ENCODE measurements at regions of chr13 and their contacts with region 1.

Region 1: GRCh38 chr13:77599351-77599750 is 63.8 kb downstream of the SCEL start:
- DNase-seq: no peak
- H3K4me3 Mint-ChIP-seq: no peak overlapping the region
- H3K27ac Mint-ChIP-seq: no peak overlapping the region
- H3K4me1 Mint-ChIP-seq: no peaks in the 10 kb centered on the region
- H3K27me3 Mint-ChIP-seq: no peaks in the 10 kb centered on the region

Region 2: DNA sequence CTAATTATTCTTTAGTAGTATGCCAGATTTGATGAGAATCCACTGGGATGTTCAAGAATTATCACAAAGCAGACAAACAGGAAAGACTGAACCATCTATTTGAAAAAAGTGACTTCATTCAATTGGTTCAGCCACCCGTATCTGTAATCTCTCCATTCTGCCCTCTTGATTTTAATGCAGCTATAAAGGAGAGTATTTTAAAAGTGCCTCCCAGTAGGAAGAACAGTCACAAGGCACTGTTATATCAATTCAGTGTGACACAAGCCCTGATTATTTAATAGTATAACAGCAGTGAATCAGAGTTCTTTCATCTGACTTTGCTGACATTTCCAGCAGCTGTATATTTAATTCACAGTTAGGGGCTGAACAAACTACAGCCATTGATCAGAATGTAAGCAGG is 20.8 kb after region 1 on chr13:
- CTCF ChIA-PET with region 1: no interaction called
- DNase-seq: no peak
- H3K4me3 Mint-ChIP-seq: no peak overlapping the region
- H3K27ac Mint-ChIP-seq: no peak overlapping the region
- H3K4me1 Mint-ChIP-seq: no peaks in the 10 kb centered on the region
- H3K27me3 Mint-ChIP-seq: peaks cover 11% of the 10 kb centered on the region

Region 3: DNA sequence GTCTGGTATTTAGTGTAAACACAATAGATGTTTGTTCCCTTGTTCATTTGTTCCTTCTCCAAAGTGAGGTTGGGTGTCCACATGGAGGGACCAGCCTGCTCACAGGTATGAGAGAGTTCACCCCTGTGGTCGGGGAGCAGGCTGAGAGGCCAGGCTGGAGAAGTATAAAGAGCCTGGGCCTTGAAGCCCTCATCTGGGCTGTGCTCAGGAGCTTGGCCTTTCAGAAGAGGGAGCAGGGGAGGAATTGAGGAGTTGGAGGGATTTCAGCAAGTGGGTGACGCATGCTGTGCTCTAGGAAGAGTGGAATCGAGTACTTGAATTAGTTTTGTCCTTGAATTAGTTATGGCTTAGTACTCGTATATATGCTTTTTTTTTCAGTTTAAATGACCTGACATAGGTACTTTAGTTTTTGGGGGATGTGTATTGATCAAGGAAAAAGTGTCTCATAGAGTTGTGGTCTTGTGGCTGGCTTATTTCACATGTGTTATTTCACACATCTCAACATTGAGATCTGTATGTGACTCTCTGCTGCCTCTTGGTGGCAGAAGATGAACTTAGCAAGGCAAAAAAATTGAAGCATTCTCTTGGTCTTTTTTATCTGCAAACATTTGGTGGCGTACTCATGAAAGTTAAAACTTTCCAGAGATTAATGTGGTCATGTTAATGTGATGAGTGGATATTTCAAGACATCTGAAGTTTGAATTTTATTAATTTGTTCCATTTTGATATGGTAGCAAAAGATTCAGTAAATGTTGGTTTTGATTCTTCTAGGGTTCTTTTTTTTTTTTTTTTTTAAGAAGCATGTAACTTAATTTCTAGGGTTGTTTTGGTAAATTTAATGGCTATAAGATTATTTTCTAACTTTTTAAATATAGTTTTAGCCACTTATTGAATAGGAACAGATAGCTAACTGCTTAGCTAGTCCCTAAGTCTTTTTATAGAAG is 152.4 kb after region 1 on chr13:
- CTCF ChIA-PET with region 1: interaction called, 34 read pairs
- DNase-seq: peak; percentile 58
- H3K4me3 Mint-ChIP-seq: no peak overlapping the region
- H3K27ac Mint-ChIP-seq: no peak overlapping the region
- H3K4me1 Mint-ChIP-seq: peaks cover 6% of the 10 kb centered on the region
- H3K27me3 Mint-ChIP-seq: no peaks in the 10 kb centered on the region

Region 4: GRCh38 chr13:77860507-77860981 is 261.2 kb after region 1 on chr13:
- CTCF ChIA-PET with region 1: no interaction called
- DNase-seq: no peak
- H3K4me3 Mint-ChIP-seq: no peak overlapping the region
- H3K27ac Mint-ChIP-seq: no peak overlapping the region
- H3K4me1 Mint-ChIP-seq: no peaks in the 10 kb centered on the region
- H3K27me3 Mint-ChIP-seq: no peaks in the 10 kb centered on the region

Measured in activated naive CD4-positive, alpha-beta T cell treated with anti-CD3 and anti-CD28 coated beads, Interleukin-2, amount 10 ng/mL, durations not matched to agents 7 days and 5 days (primary cell).